Calu3 (cell line): ENCODE measurements at regions of chr20 and their contacts with region 1.

Region 1: GRCh38 chr20:3811467-3812258 is 8.7 kb upstream of the AP5S1 start:
- DNase-seq: peak; percentile 97
- H3K4me3 Mint-ChIP-seq: peak overlapping the region; percentile 70
- H3K27ac Mint-ChIP-seq: peak overlapping the region; percentile 95
- H3K4me1 Mint-ChIP-seq: peaks cover 28% of the 10 kb centered on the region
- H3K27me3 Mint-ChIP-seq: no peaks in the 10 kb centered on the region
- CTCF ChIP-seq: no peak

Region 2: DNA sequence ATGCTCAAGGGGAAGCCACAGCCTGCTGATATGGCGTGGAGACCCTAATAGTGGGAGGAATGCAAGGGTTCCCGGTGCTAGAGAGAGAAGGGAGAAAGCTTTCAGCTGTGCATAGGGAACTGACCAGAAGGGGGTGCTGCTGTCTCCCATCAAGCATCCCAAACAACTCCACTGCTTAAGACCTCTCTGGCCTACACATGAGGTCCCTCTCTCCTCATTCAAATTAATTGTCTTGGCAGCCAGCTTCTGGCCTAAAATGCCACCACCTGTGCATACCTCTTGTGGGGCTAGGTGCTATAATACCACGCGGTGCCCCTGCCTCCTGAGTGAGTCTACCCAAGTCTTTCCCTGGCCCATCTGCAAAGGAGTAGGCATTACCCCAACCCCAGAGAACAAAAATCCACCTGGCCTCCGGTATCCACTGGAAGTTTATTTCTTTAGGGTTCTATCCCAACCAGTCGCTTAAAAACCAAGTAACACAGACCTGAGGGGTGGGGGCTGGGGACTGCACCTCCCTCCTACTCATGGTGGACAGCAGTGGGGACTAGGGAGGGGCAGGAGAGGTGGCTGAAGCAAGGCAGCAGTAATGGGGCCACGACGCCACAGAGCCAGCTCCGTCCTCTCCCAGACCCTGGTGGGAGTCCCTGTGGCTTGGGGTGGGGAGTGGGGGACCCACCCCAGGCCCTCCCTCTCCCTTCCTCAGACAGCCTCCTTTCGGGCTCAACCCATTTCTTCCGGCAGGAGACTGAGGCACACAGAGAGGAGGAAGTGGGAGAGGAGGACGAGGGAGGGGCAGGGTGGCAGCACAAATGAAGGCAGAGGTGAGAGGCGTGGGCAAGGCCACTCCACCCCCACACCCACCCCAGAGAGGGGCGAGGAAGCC is 58.3 kb before region 1 on chr20:
- CTCF ChIA-PET with region 1: interaction called, 3 read pairs
- intact Hi-C with region 1: loop called (anchors 2 kb)
- DNase-seq: peak; percentile 50
- H3K4me3 Mint-ChIP-seq: no peak overlapping the region
- H3K27ac Mint-ChIP-seq: no peak overlapping the region
- H3K4me1 Mint-ChIP-seq: peaks cover 10% of the 10 kb centered on the region
- H3K27me3 Mint-ChIP-seq: no peaks in the 10 kb centered on the region
- CTCF ChIP-seq: no peak

Region 3: DNA sequence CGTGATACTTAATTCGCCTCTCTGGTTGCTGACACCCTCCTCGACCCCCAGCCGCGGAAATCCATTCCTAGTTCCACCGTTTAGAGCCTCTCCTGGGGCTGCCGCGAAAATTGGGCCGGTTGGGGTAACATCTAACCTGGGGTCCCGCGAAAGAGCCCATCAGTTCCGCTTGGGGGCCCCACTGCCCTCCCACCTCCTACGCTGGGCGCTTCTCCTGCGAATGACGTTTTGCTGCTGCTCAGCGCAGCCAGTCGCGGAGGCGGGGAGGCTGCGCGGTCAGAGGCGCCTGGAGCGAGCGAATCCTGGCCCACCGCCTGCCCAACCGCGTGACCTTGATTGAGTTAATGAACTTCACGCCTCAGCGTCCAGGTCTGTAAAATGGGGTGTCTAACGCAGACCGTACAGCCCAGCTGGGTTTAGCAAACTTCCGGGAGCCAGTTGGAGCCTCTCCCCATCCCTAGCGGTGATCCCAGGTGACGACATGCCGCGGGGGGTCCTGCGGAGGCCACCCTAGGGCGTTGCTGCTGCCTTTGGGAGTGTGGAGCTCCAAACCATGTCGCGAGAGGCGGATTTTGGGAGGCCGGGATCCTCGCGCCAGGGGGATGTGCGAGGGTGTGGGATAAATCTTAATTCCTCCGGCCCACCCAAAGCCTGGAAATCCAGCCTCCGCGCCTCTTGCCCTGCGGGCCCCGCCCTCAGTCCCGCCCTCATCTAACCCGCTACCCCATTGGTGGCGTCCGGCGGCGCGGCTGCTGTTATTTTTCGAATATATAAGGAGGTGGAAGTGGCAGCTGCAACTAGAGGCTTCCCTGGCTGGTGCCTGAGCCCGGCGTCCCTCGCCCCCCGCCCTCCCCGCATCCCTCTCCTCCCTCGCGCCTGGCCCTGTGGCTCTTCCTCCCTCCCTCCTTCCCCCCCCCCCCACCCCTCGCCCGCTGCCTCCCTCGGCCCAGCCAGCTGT is 15.9 kb before region 1 on chr20 and contains the start of gene CDC25B:
- CTCF ChIA-PET with region 1: interaction called, 11 read pairs
- intact Hi-C with region 1: no loop called
- DNase-seq: peak; percentile 81
- H3K4me3 Mint-ChIP-seq: peak within 1 kb of the TSS; percentile 97
- H3K27ac Mint-ChIP-seq: peak within 1 kb of the TSS; percentile 74
- H3K4me1 Mint-ChIP-seq: peaks cover 9% of the 10 kb centered on the region
- H3K27me3 Mint-ChIP-seq: no peaks in the 10 kb centered on the region
- CTCF ChIP-seq: no peak
- total RNA-seq, gene CDC25B: 69.6 and 75.0 TPM in 2 replicates